ENCODE measurements at regions of chr22 and their contacts with region 1.

Region 1: GRCh38 chr22:50148991-50149721 is 21.4 kb upstream of the PANX2 start:
- DNase-seq: no peak
- H3K4me3 ChIP-seq: no peak overlapping the region
- H3K27ac ChIP-seq: no peak overlapping the region
- H3K4me1 ChIP-seq: peaks cover 0 to 6% (median 0%) of the 10 kb centered on the region in 4 donors
- H3K27me3 ChIP-seq: peaks cover 0 to 44% of the 10 kb centered on the region in 2 donors
- CTCF ChIP-seq: peak; percentile 20 to 41

Region 2: GRCh38 chr22:50074551-50075530 is 74.3 kb before region 1 on chr22:
- intact Hi-C with region 1: no loop called
- DNase-seq: no peak
- H3K4me3 ChIP-seq: no peak overlapping the region
- H3K27ac ChIP-seq: no peak overlapping the region
- H3K4me1 ChIP-seq: no peaks in the 10 kb centered on the region
- H3K27me3 ChIP-seq: peaks cover 0 to 44% of the 10 kb centered on the region in 2 donors
- CTCF ChIP-seq: no peak

Region 3: DNA sequence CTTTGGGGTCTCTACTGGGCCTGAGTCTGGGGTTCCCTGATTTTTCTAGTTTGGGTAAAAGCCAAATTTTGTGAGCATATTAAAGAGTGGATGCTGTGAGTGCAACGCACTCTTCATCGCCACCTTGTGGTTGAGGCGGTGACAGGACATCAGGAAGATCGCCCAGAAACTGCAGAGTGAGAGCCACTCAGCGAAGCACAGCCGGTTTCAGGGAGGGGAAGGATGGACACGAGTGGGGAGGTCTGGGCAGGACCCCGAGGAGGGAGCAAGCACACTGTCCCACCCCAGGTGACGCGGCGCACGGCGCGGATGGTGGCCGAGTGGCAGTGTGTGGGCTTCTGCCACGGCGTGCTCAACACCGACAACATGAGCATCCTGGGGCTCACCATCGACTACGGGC is 60.7 kb after region 1 on chr22:
- intact Hi-C with region 1: loop called (anchors 5 kb)
- DNase-seq: peak in 1 of 2 donors; percentile 61
- H3K4me3 ChIP-seq: no peak overlapping the region
- H3K27ac ChIP-seq: no peak overlapping the region
- H3K4me1 ChIP-seq: peaks cover 0 to 7% (median 5%) of the 10 kb centered on the region in 4 donors
- H3K27me3 ChIP-seq: no peaks in the 10 kb centered on the region
- CTCF ChIP-seq: peak; percentile 74 to 84

Region 4: DNA sequence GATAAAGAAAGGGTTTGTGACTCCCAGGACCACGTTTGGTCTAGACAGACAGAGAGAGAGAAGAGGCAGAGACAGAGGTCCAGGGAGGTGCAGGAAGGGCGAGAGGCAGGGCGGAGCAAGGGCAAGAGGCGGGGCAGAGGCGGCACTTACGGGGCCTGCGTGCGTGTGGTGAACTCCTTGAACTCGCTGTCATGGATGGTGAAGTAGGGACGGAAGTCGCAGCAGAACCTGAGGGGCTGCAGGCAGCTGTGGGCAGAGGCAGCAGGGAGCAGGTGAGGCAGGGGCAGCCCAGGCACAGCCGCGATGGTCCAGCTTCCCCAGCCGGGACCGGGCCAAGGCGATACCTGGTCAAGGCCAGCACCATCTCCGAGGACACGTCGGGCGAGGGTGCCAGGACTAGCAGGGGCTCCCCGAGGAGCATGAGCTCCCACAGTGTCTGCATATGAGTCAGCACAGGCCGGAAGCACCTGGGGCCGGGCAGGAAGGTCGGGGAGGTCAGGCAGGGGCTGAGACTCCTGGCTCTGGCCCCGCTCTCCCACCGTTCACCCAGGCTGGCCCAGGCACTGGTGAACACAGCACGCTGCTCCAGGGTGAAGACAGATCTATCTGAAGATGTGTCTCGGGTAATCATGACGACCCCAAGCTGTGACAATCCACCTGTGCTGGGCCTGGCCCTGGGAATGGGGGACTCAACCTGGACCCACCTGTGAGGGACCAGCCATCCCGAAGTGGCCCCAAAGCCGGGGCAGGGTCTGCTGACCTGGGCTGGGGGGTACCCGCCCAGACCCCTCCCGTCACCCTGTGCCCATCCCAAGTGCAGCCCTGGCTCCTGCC is 165.5 kb after region 1 on chr22:
- intact Hi-C with region 1: no loop called
- DNase-seq: peak in 1 of 2 donors; percentile 76
- H3K4me3 ChIP-seq: no peak overlapping the region
- H3K27ac ChIP-seq: no peak overlapping the region
- H3K4me1 ChIP-seq: peaks cover 0 to 3% (median 1%) of the 10 kb centered on the region in 4 donors
- H3K27me3 ChIP-seq: no peaks in the 10 kb centered on the region
- CTCF ChIP-seq: no peak